ENCODE measurements at regions of chr1 and their contacts with region 1.

Region 1: DNA sequence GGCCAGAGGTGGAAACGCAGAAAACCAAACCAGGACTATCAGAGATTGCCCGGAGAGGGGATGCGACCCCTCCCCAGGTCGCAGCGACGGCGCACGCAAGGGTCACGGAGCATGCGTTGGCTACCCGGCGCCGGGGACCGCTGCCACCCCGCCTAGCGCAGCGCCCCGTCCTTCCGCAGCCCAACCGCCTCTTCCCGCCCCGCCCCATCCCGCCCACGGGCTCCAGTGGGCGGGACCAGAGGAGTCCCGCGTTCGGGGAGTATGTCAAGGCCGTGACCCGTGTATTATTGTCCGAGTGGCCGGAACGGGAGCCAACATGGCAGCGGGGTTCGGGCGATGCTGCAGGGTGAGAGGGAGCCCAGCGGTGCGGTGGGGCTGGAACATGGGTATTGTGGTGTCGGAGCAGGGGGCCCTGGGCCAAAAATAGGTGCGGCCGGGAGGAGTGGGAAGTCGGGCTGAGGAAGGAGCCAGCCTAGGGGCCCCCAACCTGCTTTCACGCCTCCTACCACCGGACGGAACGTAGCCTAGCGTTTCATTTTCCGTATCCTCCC is at the start of gene ACADM:
- DNase-seq: peak; percentile 93
- H3K4me3 ChIP-seq: peak within 1 kb of the TSS; percentile 80
- H3K27ac ChIP-seq: peak within 1 kb of the TSS; percentile 84
- H3K4me1 ChIP-seq: no peaks in the 10 kb centered on the region
- H3K27me3 ChIP-seq: no peaks in the 10 kb centered on the region
- CTCF ChIP-seq: no peak
- total RNA-seq, gene ACADM: 38.2 to 68.9 TPM

Region 2: GRCh38 chr1:75785983-75786853 is 61.7 kb after region 1 on chr1 and contains the start of gene RABGGTB:
- intact Hi-C with region 1: loop called (anchors 5 kb)
- DNase-seq: peak; percentile 96
- H3K4me3 ChIP-seq: peak within 1 kb of the TSS; percentile 44
- H3K27ac ChIP-seq: peak within 1 kb of the TSS; percentile 75
- H3K4me1 ChIP-seq: no peaks in the 10 kb centered on the region
- H3K27me3 ChIP-seq: no peaks in the 10 kb centered on the region
- CTCF ChIP-seq: no peak
- total RNA-seq, gene RABGGTB: 58.3 to 67.6 TPM

Region 3: DNA sequence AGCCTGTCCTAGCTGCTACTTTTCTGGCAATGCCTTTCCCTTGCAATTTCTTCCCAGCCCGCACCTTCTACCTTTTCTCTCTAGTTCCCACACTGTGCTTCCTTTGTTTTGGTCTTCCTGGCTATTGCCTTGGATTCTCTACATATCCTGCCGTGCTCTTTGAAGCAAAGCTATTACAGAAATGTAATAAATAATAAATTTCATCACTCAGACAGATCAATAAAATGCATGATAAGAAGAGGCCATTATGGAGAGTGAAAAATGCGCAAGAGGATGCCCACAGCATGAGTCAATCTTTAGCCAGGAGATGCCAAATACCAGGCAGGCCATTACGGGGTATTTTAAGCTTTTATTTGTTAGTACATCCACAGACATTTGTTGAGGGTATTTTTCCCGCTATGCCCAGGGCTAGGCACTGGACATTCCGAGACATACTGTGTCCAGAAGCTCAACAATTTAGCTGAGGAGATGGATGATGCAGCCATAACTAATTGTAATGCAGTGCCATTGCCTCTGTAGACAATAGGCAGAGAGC is 513.6 kb after region 1 on chr1:
- intact Hi-C with region 1: no loop called
- DNase-seq: no peak
- H3K4me3 ChIP-seq: no peak overlapping the region
- H3K27ac ChIP-seq: no peak overlapping the region
- H3K4me1 ChIP-seq: no peaks in the 10 kb centered on the region
- H3K27me3 ChIP-seq: no peaks in the 10 kb centered on the region
- CTCF ChIP-seq: no peak